ENCODE measurements at regions of chr9 and their contacts with region 1.

Region 1: DNA sequence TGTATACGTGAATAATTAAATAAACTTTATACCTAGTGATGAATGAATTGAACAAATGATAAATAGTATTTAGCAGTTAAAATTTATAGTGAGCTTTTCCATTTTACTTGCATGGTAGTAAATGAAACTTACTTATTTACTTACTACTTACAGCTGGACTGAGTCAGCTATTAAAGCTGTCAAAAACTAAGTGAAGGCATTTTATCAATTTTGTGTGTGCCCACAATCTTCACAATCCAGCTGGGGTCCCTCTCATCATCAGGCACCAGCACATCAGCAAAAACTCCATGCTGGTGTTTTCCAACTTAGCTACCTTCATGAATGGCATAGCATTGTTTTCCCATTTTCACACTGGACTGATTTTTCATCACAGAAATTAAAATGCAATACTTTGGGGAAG is 81.1 kb downstream of the SAXO1 start:
- DNase-seq: no peak
- ATAC-seq: no peak
- H3K4me3 ChIP-seq: no peak overlapping the region
- H3K4me3 Mint-ChIP-seq: no peak overlapping the region
- H3K27ac ChIP-seq: no peak overlapping the region
- H3K27ac Mint-ChIP-seq: no peak overlapping the region
- H3K4me1 ChIP-seq: no peaks in the 10 kb centered on the region
- H3K4me1 Mint-ChIP-seq: no peaks in the 10 kb centered on the region
- H3K27me3 ChIP-seq: no peaks in the 10 kb centered on the region
- H3K27me3 Mint-ChIP-seq: peaks cover 10% of the 10 kb centered on the region
- CTCF ChIP-seq: no peak

Region 2: DNA sequence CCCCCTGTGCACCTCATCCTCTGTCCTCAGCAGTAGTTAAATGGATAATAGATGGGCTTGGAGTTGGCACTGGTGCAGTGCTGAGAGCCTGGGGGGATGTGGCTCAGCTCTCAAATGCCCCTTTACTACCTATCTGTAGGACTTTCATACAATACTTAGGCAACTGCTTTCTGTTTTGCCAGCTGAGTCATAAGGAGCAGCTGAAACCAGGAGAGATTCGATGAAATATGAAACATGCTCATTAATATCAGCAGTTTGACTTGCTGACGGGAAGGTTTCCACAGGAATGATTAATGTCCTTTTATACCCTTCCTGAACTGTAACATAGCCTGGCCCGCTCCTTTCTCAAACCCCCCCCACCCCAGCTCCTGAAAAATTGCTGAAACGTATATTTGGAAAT is 61.6 kb before region 1 on chr9:
- CTCF ChIA-PET with region 1: no interaction called
- POLR2A ChIA-PET with region 1: no interaction called
- intact Hi-C with region 1: loop called in 1 of 2 experiments (anchors 10 kb)
- DNase-seq: no peak
- ATAC-seq: no peak
- H3K4me3 ChIP-seq: no peak overlapping the region
- H3K4me3 Mint-ChIP-seq: no peak overlapping the region
- H3K27ac ChIP-seq: no peak overlapping the region
- H3K27ac Mint-ChIP-seq: no peak overlapping the region
- H3K4me1 ChIP-seq: no peaks in the 10 kb centered on the region
- H3K4me1 Mint-ChIP-seq: no peaks in the 10 kb centered on the region
- H3K27me3 ChIP-seq: no peaks in the 10 kb centered on the region
- H3K27me3 Mint-ChIP-seq: peaks cover 5% of the 10 kb centered on the region
- CTCF ChIP-seq: no peak

Measured in CD4-positive, alpha-beta T cell (primary cell).